ENCODE measurements at regions of chr3 and their contacts with region 1.

Region 1: GRCh38 chr3:14480207-14481025 is 59.7 kb downstream of the GRIP2 start:
- DNase-seq: no peak
- H3K4me3 ChIP-seq: no peak overlapping the region
- H3K27ac ChIP-seq: no peak overlapping the region
- H3K4me1 ChIP-seq: peaks cover 0 to 4% of the 10 kb centered on the region in 2 donors
- H3K27me3 ChIP-seq: no peaks in the 10 kb centered on the region
- CTCF ChIP-seq: no peak
- POLR2A ChIP-seq: no peak

Region 2: DNA sequence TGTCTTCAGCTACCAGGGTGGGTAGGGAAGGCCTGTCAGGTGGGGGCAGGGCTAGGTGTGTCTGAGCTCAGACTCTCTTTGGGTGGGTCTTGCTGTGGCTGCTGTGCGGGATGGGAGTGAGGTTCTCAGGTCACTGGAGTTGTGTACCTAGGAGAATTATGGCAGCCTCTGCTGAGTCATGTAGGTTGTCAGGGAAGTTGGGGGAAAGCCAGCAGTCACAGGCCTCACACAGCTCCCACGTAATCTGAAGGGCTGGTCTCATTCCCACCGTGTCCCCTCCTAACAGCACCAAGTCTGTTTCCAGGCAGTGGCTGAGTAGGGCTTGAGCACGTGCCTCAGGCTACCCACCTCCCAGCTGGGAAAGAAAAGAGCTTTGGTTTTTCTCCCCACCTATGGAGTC is 422.7 kb before region 1 on chr3:
- intact Hi-C with region 1: no loop called
- DNase-seq: no peak
- H3K4me3 ChIP-seq: no peak overlapping the region
- H3K27ac ChIP-seq: no peak overlapping the region
- H3K4me1 ChIP-seq: no peaks in the 10 kb centered on the region
- H3K27me3 ChIP-seq: no peaks in the 10 kb centered on the region
- CTCF ChIP-seq: no peak
- POLR2A ChIP-seq: no peak

Region 3: GRCh38 chr3:14803101-14803980 is 322.9 kb after region 1 on chr3:
- intact Hi-C with region 1: loop called (anchors 10 kb)
- DNase-seq: no peak
- H3K4me3 ChIP-seq: no peak overlapping the region
- H3K27ac ChIP-seq: peak overlapping the region in 1 of 2 donors; percentile 78
- H3K4me1 ChIP-seq: no peaks in the 10 kb centered on the region
- H3K27me3 ChIP-seq: peaks cover 0 to 5% of the 10 kb centered on the region in 2 donors
- CTCF ChIP-seq: no peak
- POLR2A ChIP-seq: no peak